MCF 10A (cell line): ENCODE measurements at regions of chr6 and their contacts with region 1.

Region 1: GRCh38 chr6:137811121-137811915 is 55.7 kb upstream of the TNFAIP3 start:
- DNase-seq: peak; percentile 92
- H3K4me3 Mint-ChIP-seq: peak overlapping the region; percentile 58
- H3K27ac Mint-ChIP-seq: peak overlapping the region; percentile 94
- H3K4me1 Mint-ChIP-seq: peaks cover 55% of the 10 kb centered on the region
- H3K27me3 Mint-ChIP-seq: no peaks in the 10 kb centered on the region
- CTCF ChIP-seq: no peak

Region 2: GRCh38 chr6:137823826-137824555 is 12.7 kb after region 1 on chr6:
- CTCF ChIA-PET with region 1: interaction called, 7 read pairs
- POLR2A ChIA-PET with region 1: interaction called, 49 read pairs
- intact Hi-C with region 1: no loop called
- DNase-seq: no peak
- H3K4me3 Mint-ChIP-seq: no peak overlapping the region
- H3K27ac Mint-ChIP-seq: peak overlapping the region; percentile 92
- H3K4me1 Mint-ChIP-seq: peaks cover 33% of the 10 kb centered on the region
- H3K27me3 Mint-ChIP-seq: no peaks in the 10 kb centered on the region
- CTCF ChIP-seq: no peak